ENCODE measurements at regions of chr1 and their contacts with region 1.

Region 1: GRCh38 chr1:220046052-220046930 is at the start of gene EPRS1:
- DNase-seq: peak; percentile 97
- H3K4me3 Mint-ChIP-seq: peak within 1 kb of the TSS; percentile 97
- H3K27ac Mint-ChIP-seq: peak within 1 kb of the TSS; percentile 99
- H3K4me1 Mint-ChIP-seq: peaks cover 10% of the 10 kb centered on the region
- H3K27me3 Mint-ChIP-seq: no peaks in the 10 kb centered on the region
- CTCF ChIP-seq: peak; percentile 63
- total RNA-seq, gene EPRS1: 143 and 155 TPM in 2 replicates

Region 2: DNA sequence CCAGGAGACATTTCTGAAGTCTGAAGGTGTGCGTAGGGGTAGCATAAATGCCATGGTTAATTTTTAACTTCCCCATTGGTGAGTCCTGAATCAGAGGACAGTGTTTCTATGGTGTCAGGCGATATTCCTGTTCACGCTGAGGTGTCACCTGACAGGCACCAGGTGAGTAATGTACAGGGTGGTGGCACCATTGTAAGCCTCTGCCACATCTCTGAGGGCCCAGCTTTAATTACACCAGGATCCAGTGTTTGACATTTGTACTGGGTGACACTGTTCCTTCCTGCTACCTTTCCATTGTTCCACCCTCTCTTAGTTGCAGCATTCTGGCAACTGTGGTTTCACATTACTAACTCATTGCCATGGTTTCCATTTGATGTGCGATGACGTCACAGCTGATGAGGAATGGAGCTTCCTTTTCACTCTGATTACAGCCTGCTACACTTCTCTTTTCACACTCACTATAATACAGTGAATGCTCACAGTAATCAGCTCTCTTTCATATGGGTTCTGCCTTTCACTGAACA is 441.1 kb after region 1 on chr1:
- CTCF ChIA-PET with region 1: no interaction called
- intact Hi-C with region 1: loop called (anchors 5 kb)
- DNase-seq: peak; percentile 77
- H3K4me3 Mint-ChIP-seq: no peak overlapping the region
- H3K27ac Mint-ChIP-seq: peak overlapping the region; percentile 76
- H3K4me1 Mint-ChIP-seq: peaks cover 11% of the 10 kb centered on the region
- H3K27me3 Mint-ChIP-seq: no peaks in the 10 kb centered on the region
- CTCF ChIP-seq: no peak

Measured in Calu3 (cell line).